Right ventricle myocardium superior (tissue), 1 donor: ENCODE measurements at regions of chr9 and their contacts with region 1.

Region 1: GRCh38 chr9:109817846-109818472 is 38.0 kb downstream of the PALM2AKAP2 start:
- DNase-seq: no peak
- ATAC-seq: peak; percentile 90

Region 2: DNA sequence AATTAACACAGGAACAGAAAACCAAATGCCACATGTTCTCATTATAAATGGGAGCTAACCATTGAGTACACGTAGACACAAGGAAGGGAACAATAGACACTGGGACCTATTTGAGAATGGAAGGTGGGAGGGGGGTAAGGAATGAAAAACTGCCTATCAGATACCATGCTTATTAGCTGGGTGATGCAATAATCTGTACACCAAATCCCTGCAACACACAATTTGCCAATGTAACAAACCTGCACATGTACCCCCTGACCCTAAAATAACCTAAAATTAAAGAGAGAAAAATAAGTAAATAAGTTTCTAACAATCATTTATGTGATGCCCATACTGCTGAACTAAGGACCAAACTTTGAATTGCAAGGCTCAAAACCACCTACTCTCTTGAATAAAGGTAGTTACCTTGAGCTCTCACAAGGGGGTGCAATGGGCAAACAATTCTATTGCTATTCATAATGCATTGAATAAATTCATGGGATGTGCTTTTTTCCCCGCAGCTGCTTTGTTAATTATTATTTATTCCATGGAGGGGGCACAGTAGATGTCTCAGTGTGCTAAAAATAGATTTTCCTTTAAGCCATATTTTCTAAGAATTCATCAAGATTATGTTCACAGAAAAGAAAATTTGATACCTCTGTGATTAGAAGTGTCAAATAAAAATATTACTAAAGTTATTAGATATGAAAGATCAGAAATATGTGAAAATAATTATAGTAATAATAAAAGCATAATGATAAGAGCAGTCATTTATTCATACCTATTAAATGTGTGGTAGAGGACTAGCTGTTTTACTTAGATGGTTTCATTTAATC is 243.7 kb before region 1 on chr9:
- intact Hi-C with region 1: loop called (anchors 2 kb)
- DNase-seq: no peak
- ATAC-seq: peak; percentile 81

Region 3: GRCh38 chr9:109986521-109986991 is 168.6 kb after region 1 on chr9:
- intact Hi-C with region 1: no loop called
- DNase-seq: no peak
- ATAC-seq: no peak